Right cardiac atrium (tissue), 5 donors: ENCODE measurements at regions of chr2 and their contacts with region 1.

Region 1: GRCh38 chr2:80073134-80073561 is 231.4 kb downstream of the LRRTM1 start:
- DNase-seq: peak in 1 of 3 donors; percentile 10
- ATAC-seq: peak; percentile 51 to 55
- H3K4me3 ChIP-seq: no peak overlapping the region
- H3K27ac ChIP-seq: no peak overlapping the region
- H3K4me1 ChIP-seq: no peaks in the 10 kb centered on the region
- H3K27me3 ChIP-seq: no peaks in the 10 kb centered on the region

Region 2: GRCh38 chr2:80126596-80127189 is 53.5 kb after region 1 on chr2:
- intact Hi-C with region 1: no loop called
- DNase-seq: no peak
- ATAC-seq: no peak
- H3K4me3 ChIP-seq: no peak overlapping the region
- H3K27ac ChIP-seq: no peak overlapping the region
- H3K4me1 ChIP-seq: no peaks in the 10 kb centered on the region
- H3K27me3 ChIP-seq: no peaks in the 10 kb centered on the region

Region 3: DNA sequence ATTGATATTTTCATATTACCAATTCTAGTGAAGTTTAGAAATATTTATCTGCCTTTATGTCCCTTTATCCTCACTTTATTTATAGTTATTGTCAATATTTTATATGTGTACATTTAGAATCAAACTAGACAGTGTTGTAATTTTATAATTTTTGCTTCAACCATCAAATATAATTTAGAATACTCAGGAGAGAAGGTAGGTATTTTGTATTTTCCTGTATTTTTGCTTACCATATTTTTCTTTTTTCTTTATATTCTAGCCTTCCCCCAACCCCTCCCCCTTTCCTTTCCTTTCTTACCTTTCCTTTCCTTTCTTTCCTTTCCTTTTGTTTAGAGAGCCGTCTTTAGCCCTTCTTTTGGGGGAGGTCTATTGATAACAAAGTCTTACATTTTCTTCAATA is 91.2 kb after region 1 on chr2:
- intact Hi-C with region 1: no loop called
- DNase-seq: no peak
- ATAC-seq: no peak
- H3K4me3 ChIP-seq: no peak overlapping the region
- H3K27ac ChIP-seq: no peak overlapping the region
- H3K4me1 ChIP-seq: no peaks in the 10 kb centered on the region
- H3K27me3 ChIP-seq: no peaks in the 10 kb centered on the region

Region 4: DNA sequence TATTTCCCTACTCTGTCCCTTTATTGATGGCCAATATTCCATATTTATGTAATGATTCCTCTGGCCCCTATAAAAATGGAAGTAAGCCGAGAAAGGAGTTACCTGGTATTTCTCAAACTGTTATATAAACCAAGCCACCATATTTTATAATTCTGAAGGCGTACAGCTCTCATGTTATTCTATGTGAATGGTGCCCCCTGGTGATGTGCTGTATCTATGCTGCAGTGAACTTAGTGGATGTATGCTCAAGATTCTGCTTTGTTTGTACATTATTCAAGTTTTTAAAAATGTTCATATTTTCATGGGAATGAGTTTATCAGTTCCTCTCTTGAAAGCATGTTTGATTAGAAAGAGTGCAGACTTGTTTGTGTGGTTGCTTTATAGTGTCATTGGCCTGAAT is 425.9 kb after region 1 on chr2:
- intact Hi-C with region 1: loop called in 2 of 4 experiments (anchors 5 to 10 kb)
- DNase-seq: peak; percentile 24 to 68 (median 24)
- ATAC-seq: peak; percentile 49 to 66
- H3K4me3 ChIP-seq: no peak overlapping the region
- H3K27ac ChIP-seq: no peak overlapping the region
- H3K4me1 ChIP-seq: no peaks in the 10 kb centered on the region
- H3K27me3 ChIP-seq: no peaks in the 10 kb centered on the region

Region 5: GRCh38 chr2:80506563-80506962 is 433.4 kb after region 1 on chr2:
- intact Hi-C with region 1: loop called in 1 of 4 experiments (anchors 10 kb)
- DNase-seq: no peak
- ATAC-seq: no peak
- H3K4me3 ChIP-seq: no peak overlapping the region
- H3K27ac ChIP-seq: no peak overlapping the region
- H3K4me1 ChIP-seq: no peaks in the 10 kb centered on the region
- H3K27me3 ChIP-seq: no peaks in the 10 kb centered on the region